Mammary epithelial cell (primary cell): ENCODE measurements at regions of chr10 and their contacts with region 1.

Region 1: GRCh38 chr10:108393089-108393488 is 1228.6 kb upstream of the SORCS1 start:
- DNase-seq: peak; percentile 10
- H3K4me3 ChIP-seq: no peak overlapping the region
- H3K27ac ChIP-seq: no peak overlapping the region
- H3K4me1 ChIP-seq: peaks cover 9% of the 10 kb centered on the region
- H3K27me3 ChIP-seq: no peaks in the 10 kb centered on the region
- CTCF ChIP-seq: no peak

Region 2: GRCh38 chr10:107728824-107729223 is 664.3 kb before region 1 on chr10:
- CTCF ChIA-PET with region 1: no interaction called
- dilution Hi-C with region 1: no loop called
- in situ Hi-C with region 1: no loop called
- intact Hi-C with region 1: no loop called
- DNase-seq: peak; percentile 73
- H3K4me3 ChIP-seq: no peak overlapping the region
- H3K27ac ChIP-seq: no peak overlapping the region
- H3K4me1 ChIP-seq: peaks cover 30% of the 10 kb centered on the region
- H3K27me3 ChIP-seq: no peaks in the 10 kb centered on the region
- CTCF ChIP-seq: no peak

Region 3: GRCh38 chr10:108275895-108276685 is 117.0 kb before region 1 on chr10:
- CTCF ChIA-PET with region 1: no interaction called
- dilution Hi-C with region 1: no loop called
- in situ Hi-C with region 1: no loop called
- intact Hi-C with region 1: no loop called
- DNase-seq: no peak
- H3K4me3 ChIP-seq: no peak overlapping the region
- H3K27ac ChIP-seq: no peak overlapping the region
- H3K4me1 ChIP-seq: no peaks in the 10 kb centered on the region
- H3K27me3 ChIP-seq: no peaks in the 10 kb centered on the region
- CTCF ChIP-seq: no peak

Region 4: GRCh38 chr10:108375691-108376090 is 17.4 kb before region 1 on chr10:
- CTCF ChIA-PET with region 1: no interaction called
- dilution Hi-C with region 1: no loop called
- in situ Hi-C with region 1: no loop called
- intact Hi-C with region 1: loop called (anchors 2 kb)
- DNase-seq: peak; percentile 80
- H3K4me3 ChIP-seq: no peak overlapping the region
- H3K27ac ChIP-seq: no peak overlapping the region
- H3K4me1 ChIP-seq: no peaks in the 10 kb centered on the region
- H3K27me3 ChIP-seq: no peaks in the 10 kb centered on the region
- CTCF ChIP-seq: no peak